ENCODE measurements at regions of chr1 and their contacts with region 1.

Region 1: DNA sequence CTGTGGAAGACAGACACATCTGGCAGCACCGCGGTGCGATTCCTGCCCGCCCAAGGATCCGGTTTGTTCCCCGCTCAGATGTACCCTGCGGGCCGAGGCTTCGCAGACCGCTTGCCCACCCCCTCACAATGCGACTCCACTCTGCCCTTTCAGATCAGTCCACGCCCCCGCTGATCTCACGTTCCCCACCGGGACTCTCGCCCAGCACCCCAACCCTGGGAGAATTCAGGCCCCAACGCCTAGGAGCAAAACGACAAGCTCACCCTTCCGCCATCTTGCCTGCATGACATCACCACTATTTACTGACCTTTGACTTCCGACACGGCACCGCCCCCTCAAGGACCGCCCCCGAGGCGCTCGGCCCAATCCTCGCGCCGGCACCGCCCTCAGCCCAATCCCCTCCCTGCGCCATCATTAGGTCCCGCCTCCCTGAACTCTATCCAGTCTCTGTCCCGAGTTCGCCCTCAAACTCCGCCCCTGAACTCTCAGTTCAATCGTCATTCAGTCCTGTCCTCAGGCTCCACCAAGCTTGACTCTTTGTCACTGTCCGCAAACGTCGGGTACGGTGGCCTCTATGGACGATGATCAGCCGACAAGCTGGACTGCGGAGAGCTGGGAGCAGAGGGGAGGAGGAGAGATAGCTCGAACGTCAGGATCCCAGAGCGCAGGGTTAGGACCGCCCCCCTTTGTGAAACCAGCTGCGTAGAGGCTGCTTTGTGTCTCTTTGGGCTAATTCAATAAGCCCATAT is at the start of gene BSDC1:
- DNase-seq: peak; percentile 99
- H3K4me3 ChIP-seq: peak within 1 kb of the TSS; percentile 65 to 98 (median 72)
- H3K27ac ChIP-seq: peak within 1 kb of the TSS; percentile 86 to 98 (median 90)
- H3K4me1 ChIP-seq: peaks cover 23 to 34% (median 29%) of the 10 kb centered on the region in 4 donors
- H3K27me3 ChIP-seq: no peaks in the 10 kb centered on the region
- CTCF ChIP-seq: no peak
- EP300 ChIP-seq: no peak
- POLR2A ChIP-seq: peak; percentile 96
- total RNA-seq, gene BSDC1: 94.8 to 140 (median 117) TPM

Region 2: GRCh38 chr1:31834501-31834900 is 559.8 kb before region 1 on chr1:
- in situ Hi-C with region 1: no loop called
- intact Hi-C with region 1: no loop called
- DNase-seq: peak; percentile 19
- H3K4me3 ChIP-seq: no peak overlapping the region
- H3K27ac ChIP-seq: no peak overlapping the region
- H3K4me1 ChIP-seq: peaks cover 0 to 28% (median 8%) of the 10 kb centered on the region in 4 donors
- H3K27me3 ChIP-seq: peaks cover 2% of the 10 kb centered on the region
- CTCF ChIP-seq: no peak
- EP300 ChIP-seq: no peak
- POLR2A ChIP-seq: no peak

Region 3: DNA sequence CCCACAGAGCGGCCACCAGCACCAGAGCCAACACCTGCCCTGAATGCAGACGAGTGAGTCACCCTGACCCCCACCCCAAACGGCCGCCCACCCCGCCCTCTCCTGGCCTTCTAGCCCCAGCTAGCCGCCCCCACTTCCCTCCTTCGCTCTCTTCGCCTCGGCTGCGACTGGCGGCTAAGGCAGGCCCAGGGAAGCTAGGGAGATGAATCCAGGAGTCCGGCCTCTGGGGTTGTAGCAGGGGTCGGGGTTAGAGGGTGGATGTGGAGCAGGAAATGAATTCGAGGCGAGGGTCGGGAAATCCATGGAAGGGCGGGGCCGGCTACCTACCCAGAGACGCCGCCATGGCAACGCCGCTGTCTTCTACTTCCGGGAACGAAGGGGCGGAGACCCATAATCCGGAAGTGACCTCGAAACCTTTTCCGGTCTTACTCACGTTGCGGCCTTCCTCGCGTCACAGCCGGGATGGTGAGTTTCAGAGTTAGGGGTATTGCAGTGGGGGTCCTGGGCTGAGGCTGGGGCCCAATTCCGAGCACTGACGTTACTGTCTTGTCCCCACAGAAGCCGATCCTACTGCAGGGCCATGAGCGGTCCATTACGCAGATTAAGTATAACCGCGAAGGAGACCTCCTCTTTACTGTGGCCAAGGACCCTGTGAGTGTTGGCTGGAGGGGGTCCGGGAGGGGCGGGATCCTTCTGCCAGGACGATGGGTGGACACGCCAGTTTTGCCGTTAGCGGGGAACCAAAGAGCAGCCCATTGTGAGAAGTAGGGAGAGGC is 172.1 kb before region 1 on chr1 and contains the starts of genes EIF3I and TMEM234:
- in situ Hi-C with region 1: loop called in 1 of 4 experiments (anchors 25 kb)
- intact Hi-C with region 1: no loop called
- DNase-seq: peak; percentile 95
- H3K4me3 ChIP-seq: peak within 1 kb of the TSS; percentile 79 to 98 (median 90)
- H3K27ac ChIP-seq: peak within 1 kb of the TSS; percentile 87 to 93 (median 91)
- H3K4me1 ChIP-seq: peaks cover 20 to 29% (median 24%) of the 10 kb centered on the region in 4 donors
- H3K27me3 ChIP-seq: no peaks in the 10 kb centered on the region
- CTCF ChIP-seq: no peak
- EP300 ChIP-seq: no peak
- POLR2A ChIP-seq: peak; percentile 71
- total RNA-seq, gene EIF3I: 43.8 to 122 (median 114) TPM
- total RNA-seq, gene TMEM234: 16.5 to 166 (median 22.7) TPM

Measured in transverse colon (tissue), 4 donors.